ENCODE measurements at regions of chr6 and their contacts with region 1.

Region 1: DNA sequence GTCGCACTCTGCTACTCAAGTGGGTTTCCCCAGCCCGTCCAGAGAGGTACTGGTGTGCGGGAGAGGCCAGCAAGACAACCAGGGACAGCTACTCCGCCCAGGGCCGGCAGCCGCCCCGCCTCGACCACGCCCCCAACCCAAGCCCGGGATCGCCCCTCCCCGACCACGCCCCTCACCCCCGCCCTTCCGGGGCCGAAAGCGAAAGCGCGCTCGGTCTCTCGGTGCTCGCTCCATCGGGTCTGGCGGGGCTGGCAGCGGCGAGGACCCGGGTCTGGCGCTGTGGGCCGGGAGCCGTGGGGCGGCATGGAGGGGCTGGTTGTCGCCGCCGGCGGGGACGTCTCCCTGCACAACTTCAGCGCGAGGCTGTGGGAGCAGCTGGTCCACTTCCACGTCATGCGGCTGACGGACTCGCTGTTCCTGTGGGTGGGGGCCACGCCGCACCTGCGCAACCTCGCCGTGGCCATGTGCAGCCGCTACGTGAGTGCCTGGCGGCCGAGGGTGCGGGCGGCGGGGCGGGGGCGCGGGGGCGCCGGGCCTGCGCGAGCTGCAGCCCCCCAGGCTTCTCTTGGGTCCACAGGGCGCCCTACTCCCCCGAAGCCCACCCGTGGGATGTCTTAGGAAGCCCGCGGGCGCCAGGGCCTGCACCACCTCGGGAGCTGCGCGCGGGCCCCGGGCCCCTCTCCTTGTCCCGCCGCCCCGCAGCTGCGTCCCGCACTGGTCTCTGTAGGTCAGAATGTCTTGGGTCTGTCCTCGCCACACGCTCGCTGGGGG is at the start of gene PSMG4:
- DNase-seq: peak; percentile 98
- H3K4me3 Mint-ChIP-seq: peak within 1 kb of the TSS; percentile 96
- H3K27ac Mint-ChIP-seq: peak within 1 kb of the TSS; percentile 98
- H3K4me1 Mint-ChIP-seq: peaks cover 33% of the 10 kb centered on the region
- H3K27me3 Mint-ChIP-seq: peaks cover 19% of the 10 kb centered on the region
- total RNA-seq, gene PSMG4: 33.4 and 35.6 TPM in 2 replicates

Region 2: DNA sequence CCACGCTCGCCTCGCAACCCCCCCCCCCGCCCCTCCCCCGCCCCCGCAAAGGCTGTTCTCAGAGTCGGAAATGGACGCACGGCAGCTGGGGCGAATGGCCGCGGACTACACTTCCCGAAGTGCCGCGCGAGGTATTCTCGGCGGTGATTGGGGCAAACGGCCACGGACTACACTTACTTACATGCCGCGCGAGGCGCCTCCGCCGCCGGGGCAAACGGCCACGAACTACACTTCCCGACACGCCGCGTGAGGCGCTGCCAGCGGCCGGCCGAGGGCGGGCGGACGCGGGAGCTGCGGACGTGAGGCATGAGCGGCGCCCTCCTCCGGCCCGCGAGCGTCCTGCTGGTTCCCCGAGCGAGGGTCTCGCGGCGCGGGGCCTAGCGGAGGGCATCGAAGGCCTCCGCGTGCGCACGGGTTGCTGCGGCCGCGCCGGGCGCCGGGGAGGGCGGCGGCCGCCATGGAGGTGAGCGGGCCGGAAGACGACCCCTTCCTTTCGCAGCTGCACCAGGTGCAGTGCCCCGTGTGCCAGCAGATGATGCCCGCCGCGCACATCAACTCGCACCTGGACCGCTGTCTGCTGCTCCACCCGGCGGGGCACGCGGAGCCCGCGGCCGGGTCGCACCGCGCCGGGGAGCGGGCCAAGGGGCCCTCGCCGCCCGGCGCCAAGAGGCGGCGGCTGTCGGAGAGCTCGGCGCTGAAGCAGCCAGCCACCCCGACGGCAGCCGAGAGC is 493.6 kb before region 1 on chr6 and contains the start of gene WRNIP1:
- intact Hi-C with region 1: loop called (anchors 2 kb)
- DNase-seq: peak; percentile 99
- H3K4me3 Mint-ChIP-seq: peak within 1 kb of the TSS; percentile 88
- H3K27ac Mint-ChIP-seq: peak within 1 kb of the TSS; percentile 95
- H3K4me1 Mint-ChIP-seq: peaks cover 45% of the 10 kb centered on the region
- H3K27me3 Mint-ChIP-seq: no peaks in the 10 kb centered on the region
- total RNA-seq, gene WRNIP1: 49.3 and 50.5 TPM in 2 replicates

Region 3: GRCh38 chr6:2999618-3000557 is 259.0 kb before region 1 on chr6 and contains the start of gene NQO2:
- intact Hi-C with region 1: loop called (anchors 2 kb)
- DNase-seq: peak; percentile 97
- H3K4me3 Mint-ChIP-seq: peak within 1 kb of the TSS; percentile 92
- H3K27ac Mint-ChIP-seq: peak within 1 kb of the TSS; percentile 88
- H3K4me1 Mint-ChIP-seq: peaks cover 30% of the 10 kb centered on the region
- H3K27me3 Mint-ChIP-seq: peaks cover 3% of the 10 kb centered on the region
- total RNA-seq, gene NQO2: 29.1 and 34.0 TPM in 2 replicates

Region 4: DNA sequence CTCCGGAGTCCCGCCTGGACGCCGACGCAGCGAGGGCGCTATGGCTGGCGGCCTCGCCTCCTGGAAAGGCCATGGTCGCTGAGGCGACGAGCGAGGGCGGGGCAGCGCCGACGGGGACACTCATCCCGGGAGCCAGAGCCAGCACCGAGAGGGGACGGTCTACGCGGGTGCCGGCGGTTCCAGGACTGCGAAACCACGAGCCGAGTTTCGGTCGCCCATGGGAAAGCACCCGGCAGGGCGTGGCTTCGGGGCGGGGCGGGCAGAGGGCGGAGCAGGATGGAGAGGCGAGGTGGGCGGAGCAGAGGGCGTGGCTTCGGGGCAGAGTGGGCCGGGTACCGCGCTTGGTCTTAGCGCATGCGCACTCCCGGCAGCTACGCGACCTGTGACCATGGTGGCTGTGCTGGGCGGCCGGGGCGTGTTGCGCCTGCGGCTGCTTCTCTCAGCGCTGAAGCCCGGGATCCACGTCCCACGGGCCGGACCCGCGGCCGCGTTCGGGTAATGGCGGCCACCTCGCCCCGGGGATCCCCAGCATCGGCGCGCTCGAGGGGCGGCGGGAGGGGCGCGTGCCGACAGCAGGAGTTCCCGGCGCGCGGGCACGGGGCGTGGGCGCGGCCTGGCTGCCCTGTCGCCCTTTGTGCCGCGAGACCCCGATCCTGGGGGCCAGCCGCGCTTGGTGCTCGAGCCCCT is 140.4 kb before region 1 on chr6 and contains the start of gene BPHL:
- intact Hi-C with region 1: loop called (anchors 1 kb)
- DNase-seq: peak; percentile 100
- H3K4me3 Mint-ChIP-seq: peak within 1 kb of the TSS; percentile 89
- H3K27ac Mint-ChIP-seq: peak within 1 kb of the TSS; percentile 91
- H3K4me1 Mint-ChIP-seq: peaks cover 14% of the 10 kb centered on the region
- H3K27me3 Mint-ChIP-seq: peaks cover 3% of the 10 kb centered on the region
- total RNA-seq, gene BPHL: 6.8 and 7.7 TPM in 2 replicates

Region 5: GRCh38 chr6:3209114-3210023 is 49.5 kb before region 1 on chr6:
- intact Hi-C with region 1: loop called (anchors 2 kb)
- DNase-seq: peak; percentile 70
- H3K4me3 Mint-ChIP-seq: peak overlapping the region; percentile 46
- H3K27ac Mint-ChIP-seq: peak overlapping the region; percentile 94
- H3K4me1 Mint-ChIP-seq: peaks cover 25% of the 10 kb centered on the region
- H3K27me3 Mint-ChIP-seq: peaks cover 26% of the 10 kb centered on the region

Region 6: DNA sequence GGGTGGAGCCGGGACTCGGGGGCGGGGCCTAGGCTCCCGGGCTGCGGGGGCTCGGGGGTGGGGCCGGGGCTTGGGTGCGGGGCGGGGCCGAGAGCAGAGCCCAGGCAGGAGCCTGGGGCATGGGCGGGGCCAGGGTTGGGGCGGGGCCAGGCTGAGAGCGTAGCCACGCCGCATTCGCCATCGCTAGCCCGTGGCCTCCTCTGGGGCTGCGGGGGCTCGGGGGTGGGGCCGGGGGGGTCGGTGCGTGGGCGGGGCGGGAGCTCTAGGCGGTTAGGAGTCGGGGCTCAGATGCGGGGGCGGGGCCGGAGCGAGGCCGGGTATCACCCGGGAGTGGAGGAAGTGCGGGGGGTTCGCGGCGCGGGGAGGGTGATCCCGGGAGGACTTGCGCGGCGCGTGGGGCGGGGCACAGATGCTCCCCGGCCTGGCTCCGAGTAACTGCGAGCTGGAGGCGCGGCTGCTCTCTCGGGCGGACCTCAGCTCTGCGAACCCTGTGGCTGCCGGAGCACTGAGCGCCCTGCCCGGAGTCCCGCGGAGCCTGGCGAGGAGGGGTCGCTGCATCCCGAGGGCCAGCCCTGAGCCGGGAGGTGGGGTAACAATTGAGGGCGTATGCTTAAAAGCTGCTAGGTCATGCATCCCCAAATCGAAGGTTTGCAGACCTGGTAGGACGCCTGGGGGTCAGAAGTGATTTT is 876.9 kb after region 1 on chr6:
- intact Hi-C with region 1: loop called (anchors 5 kb)
- DNase-seq: peak; percentile 97
- H3K4me3 Mint-ChIP-seq: peak overlapping the region; percentile 85
- H3K27ac Mint-ChIP-seq: peak overlapping the region; percentile 84
- H3K4me1 Mint-ChIP-seq: peaks cover 28% of the 10 kb centered on the region
- H3K27me3 Mint-ChIP-seq: no peaks in the 10 kb centered on the region

Measured in activated CD4-positive, alpha-beta T cell treated with anti-CD3 and anti-CD28 coated beads, Interleukin-2, amount 10 ng/mL, durations not matched to agents 24 days and 14 days (primary cell).